HCT116 (cell line): ENCODE measurements at regions of chr5 and their contacts with region 1.

Region 1: GRCh38 chr5:69083412-69083811 is 10.4 kb upstream of the SLC30A5 start:
- DNase-seq: peak; percentile 47
- ATAC-seq: peak; percentile 99
- H3K4me3 ChIP-seq: no peak overlapping the region
- H3K27ac ChIP-seq: no peak overlapping the region
- H3K4me1 ChIP-seq: peaks cover 9 to 15% of the 10 kb centered on the region in 2 experiments
- H3K27me3 ChIP-seq: no peaks in the 10 kb centered on the region
- CTCF ChIP-seq: peak; percentile 44 to 49 (median 48); a peak in 5 of 6 replicates
- POLR2A ChIP-seq: peak; percentile 80
- RAD21 ChIP-seq: peak; percentile 59

Region 2: DNA sequence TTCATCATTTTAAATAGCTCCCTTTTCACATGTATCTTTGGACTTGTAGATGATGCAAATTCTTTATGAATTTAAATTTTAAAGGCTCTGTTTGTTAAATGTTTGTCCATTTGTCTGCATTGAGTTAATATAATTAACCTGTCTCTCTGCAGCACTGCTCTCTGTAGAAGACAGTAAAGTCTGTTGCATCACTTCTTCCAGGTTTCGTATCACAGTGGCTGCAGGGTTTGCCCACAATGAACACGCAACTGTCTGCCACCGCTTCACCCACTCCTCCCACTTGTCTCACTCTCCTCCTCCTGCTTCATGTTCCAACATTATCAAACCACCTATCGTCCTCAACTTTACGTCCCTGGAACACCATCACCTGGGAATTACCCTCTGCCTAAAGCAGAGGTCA is 220.9 kb before region 1 on chr5:
- CTCF ChIA-PET with region 1: no interaction called
- POLR2A ChIA-PET with region 1: no interaction called
- RAD21 ChIA-PET with region 1: no interaction called
- intact Hi-C with region 1: no loop called
- DNase-seq: no peak
- ATAC-seq: no peak
- H3K4me3 ChIP-seq: no peak overlapping the region
- H3K27ac ChIP-seq: no peak overlapping the region
- H3K4me1 ChIP-seq: no peaks in the 10 kb centered on the region
- H3K27me3 ChIP-seq: no peaks in the 10 kb centered on the region
- CTCF ChIP-seq: no peak
- POLR2A ChIP-seq: no peak
- RAD21 ChIP-seq: no peak

Region 3: GRCh38 chr5:68962757-68963484 is 120.5 kb before region 1 on chr5:
- CTCF ChIA-PET with region 1: no interaction called
- POLR2A ChIA-PET with region 1: no interaction called
- RAD21 ChIA-PET with region 1: no interaction called
- intact Hi-C with region 1: no loop called
- DNase-seq: peak; percentile 53
- ATAC-seq: peak; percentile 96
- H3K4me3 ChIP-seq: no peak overlapping the region
- H3K27ac ChIP-seq: no peak overlapping the region
- H3K4me1 ChIP-seq: peaks cover 0 to 8% of the 10 kb centered on the region in 2 experiments; a peak in 2 of 4 replicates
- H3K27me3 ChIP-seq: no peaks in the 10 kb centered on the region
- CTCF ChIP-seq: peak; percentile 75 to 90 (median 89); a peak in 5 of 6 replicates
- POLR2A ChIP-seq: no peak
- RAD21 ChIP-seq: peak; percentile 85

Region 4: GRCh38 chr5:69024241-69024651 is 59.2 kb before region 1 on chr5:
- CTCF ChIA-PET with region 1: interaction called, 13 read pairs
- POLR2A ChIA-PET with region 1: no interaction called
- RAD21 ChIA-PET with region 1: interaction called in 1 of 2 experiments, 4 read pairs
- intact Hi-C with region 1: no loop called
- DNase-seq: peak; percentile 70
- ATAC-seq: peak; percentile 96
- H3K4me3 ChIP-seq: no peak overlapping the region
- H3K27ac ChIP-seq: no peak overlapping the region
- H3K4me1 ChIP-seq: no peaks in the 10 kb centered on the region
- H3K27me3 ChIP-seq: no peaks in the 10 kb centered on the region
- CTCF ChIP-seq: peak; percentile 55 to 92 (median 78); a peak in 5 of 6 replicates
- POLR2A ChIP-seq: no peak
- RAD21 ChIP-seq: peak; percentile 90